Activated naive CD4-positive, alpha-beta T cell treated with anti-CD3 and anti-CD28 coated beads for 36 hours (primary cell): ENCODE measurements at regions of chr2 and their contacts with region 1.

Region 1: GRCh38 chr2:144516981-144517865 is 2.7 kb downstream of the ZEB2 start:
- DNase-seq: peak; percentile 63
- H3K4me3 Mint-ChIP-seq: no peak overlapping the region
- H3K27ac Mint-ChIP-seq: peak overlapping the region; percentile 88
- H3K4me1 Mint-ChIP-seq: peaks cover 15% of the 10 kb centered on the region
- H3K27me3 Mint-ChIP-seq: peaks cover 50% of the 10 kb centered on the region

Region 2: GRCh38 chr2:143705108-143705686 is 812.0 kb before region 1 on chr2:
- CTCF ChIA-PET with region 1: no interaction called
- intact Hi-C with region 1: loop called (anchors 10 kb)
- DNase-seq: no peak
- H3K4me3 Mint-ChIP-seq: no peak overlapping the region
- H3K27ac Mint-ChIP-seq: no peak overlapping the region
- H3K4me1 Mint-ChIP-seq: peaks cover 30% of the 10 kb centered on the region
- H3K27me3 Mint-ChIP-seq: no peaks in the 10 kb centered on the region

Region 3: DNA sequence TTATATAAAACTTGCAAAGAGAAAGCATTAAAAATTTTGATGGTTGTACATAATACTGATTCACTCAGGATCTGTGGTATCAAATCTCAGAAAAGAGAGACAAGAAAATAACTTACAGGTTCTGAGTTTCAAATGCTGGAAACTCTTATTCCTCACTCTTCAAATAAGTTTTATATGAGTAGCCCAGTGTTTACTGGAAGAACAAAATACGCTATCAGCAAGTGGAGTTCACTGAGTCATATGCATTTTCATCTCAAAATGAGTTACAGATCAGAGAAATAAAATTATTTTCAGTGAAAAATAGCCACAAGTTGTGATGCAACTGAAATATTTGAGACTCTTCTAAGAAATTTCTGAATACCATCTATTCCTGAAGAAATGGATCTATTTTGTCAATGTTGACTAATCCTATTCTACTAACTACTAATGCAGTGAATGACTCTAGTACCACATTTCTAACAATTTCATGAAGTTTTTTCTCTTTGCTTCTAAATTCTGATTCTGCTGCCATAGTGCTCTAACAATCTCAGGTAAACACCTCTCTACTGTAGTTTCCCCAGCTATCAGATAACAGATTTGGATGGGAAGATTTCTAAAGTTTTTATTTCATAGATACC is 389.0 kb before region 1 on chr2:
- CTCF ChIA-PET with region 1: no interaction called
- intact Hi-C with region 1: loop called (anchors 5 kb)
- DNase-seq: no peak
- H3K4me3 Mint-ChIP-seq: no peak overlapping the region
- H3K27ac Mint-ChIP-seq: peak overlapping the region; percentile 37
- H3K4me1 Mint-ChIP-seq: peaks cover 25% of the 10 kb centered on the region
- H3K27me3 Mint-ChIP-seq: no peaks in the 10 kb centered on the region

Region 4: GRCh38 chr2:144198117-144198516 is 319.1 kb before region 1 on chr2:
- CTCF ChIA-PET with region 1: interaction called, 4 read pairs
- intact Hi-C with region 1: loop called (anchors 2 kb)
- DNase-seq: peak; percentile 17
- H3K4me3 Mint-ChIP-seq: no peak overlapping the region
- H3K27ac Mint-ChIP-seq: peak overlapping the region; percentile 86
- H3K4me1 Mint-ChIP-seq: peaks cover 65% of the 10 kb centered on the region
- H3K27me3 Mint-ChIP-seq: no peaks in the 10 kb centered on the region

Region 5: DNA sequence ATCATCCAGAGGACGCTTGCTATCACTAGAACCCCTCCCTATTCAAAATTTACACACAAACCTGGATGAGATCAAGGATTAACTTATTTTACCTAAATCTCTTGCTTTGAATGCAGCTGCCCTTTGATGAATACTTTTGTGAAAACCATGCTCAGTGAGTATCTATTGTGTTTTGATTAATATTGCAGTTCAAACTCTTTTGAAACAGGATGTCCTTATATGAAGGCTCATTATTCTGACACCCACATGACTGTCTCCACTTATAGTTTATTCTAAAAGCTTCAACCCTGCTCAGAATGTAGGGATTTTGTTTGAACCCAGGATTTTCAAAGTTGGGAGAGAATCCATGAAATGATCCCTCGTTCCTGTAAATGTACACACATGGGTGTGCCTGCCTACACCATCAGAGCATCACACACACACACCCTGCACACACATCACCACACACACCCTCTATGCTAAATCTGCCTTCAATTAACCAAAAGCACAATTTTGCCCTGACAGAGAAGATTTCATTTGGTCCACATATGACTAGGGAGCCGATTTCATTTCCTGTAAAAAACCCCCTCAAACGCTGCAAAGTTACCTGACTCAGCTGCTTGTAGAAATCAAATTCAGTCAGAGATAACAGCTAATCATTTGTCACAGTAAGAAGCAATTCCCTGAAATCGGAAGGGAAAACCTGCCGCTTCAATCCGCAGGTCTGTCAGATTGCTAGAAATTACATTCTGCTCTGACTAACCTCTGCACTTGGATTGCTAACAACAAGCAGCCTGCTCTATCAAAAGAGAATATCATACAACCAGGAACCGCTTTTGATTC is 62.5 kb before region 1 on chr2:
- CTCF ChIA-PET with region 1: no interaction called
- intact Hi-C with region 1: loop called (anchors 2 kb)
- DNase-seq: peak; percentile 21
- H3K4me3 Mint-ChIP-seq: no peak overlapping the region
- H3K27ac Mint-ChIP-seq: no peak overlapping the region
- H3K4me1 Mint-ChIP-seq: peaks cover 27% of the 10 kb centered on the region
- H3K27me3 Mint-ChIP-seq: peaks cover 33% of the 10 kb centered on the region

Region 6: GRCh38 chr2:144572977-144573376 is 55.8 kb after region 1 on chr2:
- CTCF ChIA-PET with region 1: no interaction called
- intact Hi-C with region 1: no loop called
- DNase-seq: no peak
- H3K4me3 Mint-ChIP-seq: no peak overlapping the region
- H3K27ac Mint-ChIP-seq: no peak overlapping the region
- H3K4me1 Mint-ChIP-seq: peaks cover 12% of the 10 kb centered on the region
- H3K27me3 Mint-ChIP-seq: peaks cover 14% of the 10 kb centered on the region

Region 7: DNA sequence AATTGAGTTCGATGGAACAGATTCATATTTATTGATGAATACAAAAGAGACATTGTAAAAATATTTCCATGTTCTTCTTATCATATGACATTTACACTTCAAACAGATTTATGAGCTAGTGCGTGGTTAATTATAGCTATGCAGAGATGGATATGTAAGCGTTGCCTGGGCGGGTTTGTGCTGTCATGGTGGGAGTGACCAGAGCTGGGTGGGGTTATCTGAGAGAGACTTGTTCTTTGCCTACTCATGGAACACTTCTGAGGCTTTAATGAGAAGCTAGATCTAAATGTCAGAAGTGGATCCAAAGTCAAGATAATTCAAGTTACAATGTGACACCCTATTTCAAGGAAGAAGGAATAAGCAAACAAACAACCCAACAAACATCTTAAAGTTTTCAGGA is 165.0 kb after region 1 on chr2:
- CTCF ChIA-PET with region 1: no interaction called
- intact Hi-C with region 1: no loop called
- DNase-seq: no peak
- H3K4me3 Mint-ChIP-seq: no peak overlapping the region
- H3K27ac Mint-ChIP-seq: no peak overlapping the region
- H3K4me1 Mint-ChIP-seq: no peaks in the 10 kb centered on the region
- H3K27me3 Mint-ChIP-seq: peaks cover 10% of the 10 kb centered on the region